Naive thymus-derived CD4-positive, alpha-beta T cell (primary cell): ENCODE measurements at regions of chr2 and their contacts with region 1.

Region 1: DNA sequence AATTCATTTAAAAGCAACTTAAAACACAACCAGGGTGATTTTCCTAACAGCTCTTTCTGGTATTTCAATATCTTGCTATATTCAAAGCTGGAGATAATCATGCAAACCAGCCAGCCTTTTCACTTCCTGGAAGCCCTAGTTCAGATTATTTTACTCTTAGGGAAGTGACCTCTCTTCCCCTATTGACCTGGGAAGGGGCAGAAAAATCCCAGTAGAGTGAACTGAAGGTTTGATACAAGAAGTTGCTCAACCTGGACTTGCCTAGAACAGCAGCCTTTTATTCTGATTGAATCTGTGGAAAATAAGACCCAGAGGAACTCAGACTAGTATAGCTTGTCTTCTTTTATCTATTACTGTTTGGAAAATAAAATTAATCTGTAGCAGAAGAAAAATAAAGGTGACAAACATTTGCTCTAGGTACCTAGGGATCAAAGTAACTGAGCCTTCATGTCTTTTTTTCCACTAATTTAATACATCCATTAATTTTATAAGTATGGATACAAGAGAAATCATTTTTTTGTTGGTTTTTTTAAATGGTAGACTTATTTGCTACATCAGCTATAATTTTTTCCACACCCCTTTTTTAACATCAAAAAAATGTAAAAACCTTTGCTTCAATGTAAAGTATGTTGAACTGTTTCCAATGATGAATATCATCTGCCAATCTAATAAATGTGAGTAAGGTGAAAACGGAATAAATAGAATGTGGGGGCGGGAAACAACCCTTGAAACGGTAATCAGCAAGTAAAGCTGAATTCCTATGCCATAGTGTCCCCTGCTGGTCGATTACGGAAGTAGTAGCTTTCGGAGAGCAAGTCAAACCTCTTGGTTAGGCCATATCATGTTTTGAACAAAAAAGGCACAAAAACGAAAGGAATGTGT is 629.9 kb downstream of the NRXN1 start:
- DNase-seq: peak in 1 of 9 donors; percentile 24
- ATAC-seq: no peak
- H3K4me3 ChIP-seq: no peak overlapping the region
- H3K4me3 Mint-ChIP-seq: no peak overlapping the region
- H3K27ac ChIP-seq: no peak overlapping the region
- H3K27ac Mint-ChIP-seq: no peak overlapping the region
- H3K4me1 ChIP-seq: no peaks in the 10 kb centered on the region
- H3K4me1 Mint-ChIP-seq: no peaks in the 10 kb centered on the region
- H3K27me3 ChIP-seq: no peaks in the 10 kb centered on the region
- H3K27me3 Mint-ChIP-seq: peaks cover 0 to 4% (median 0%) of the 10 kb centered on the region in 5 donors

Region 2: GRCh38 chr2:49687918-49688317 is 714.1 kb before region 1 on chr2:
- CTCF ChIA-PET with region 1: no interaction called
- POLR2A ChIA-PET with region 1: no interaction called
- intact Hi-C with region 1: loop called in 1 of 2 experiments (anchors 2 kb)
- DNase-seq: no peak
- ATAC-seq: no peak
- H3K4me3 ChIP-seq: no peak overlapping the region
- H3K4me3 Mint-ChIP-seq: no peak overlapping the region
- H3K27ac ChIP-seq: no peak overlapping the region
- H3K27ac Mint-ChIP-seq: no peak overlapping the region
- H3K4me1 ChIP-seq: no peaks in the 10 kb centered on the region
- H3K4me1 Mint-ChIP-seq: no peaks in the 10 kb centered on the region
- H3K27me3 ChIP-seq: no peaks in the 10 kb centered on the region
- H3K27me3 Mint-ChIP-seq: peaks cover 0 to 3% (median 0%) of the 10 kb centered on the region in 5 donors